T-cell (primary cell): ENCODE measurements at regions of chr2 and their contacts with region 1.

Region 1: GRCh38 chr2:112893048-112893447 is 17.9 kb upstream of the IL37 start:
- DNase-seq: no peak
- ATAC-seq: no peak
- H3K4me3 ChIP-seq: no peak overlapping the region
- H3K4me3 Mint-ChIP-seq: no peak overlapping the region
- H3K27ac ChIP-seq: no peak overlapping the region
- H3K27ac Mint-ChIP-seq: no peak overlapping the region
- H3K4me1 ChIP-seq: no peaks in the 10 kb centered on the region
- H3K4me1 Mint-ChIP-seq: no peaks in the 10 kb centered on the region
- H3K27me3 ChIP-seq: peaks cover 0 to 4% of the 10 kb centered on the region in 2 experiments
- H3K27me3 Mint-ChIP-seq: peaks cover 3 to 5% of the 10 kb centered on the region in 2 donors

Region 2: GRCh38 chr2:112606488-112606902 is 286.6 kb before region 1 on chr2:
- CTCF ChIA-PET with region 1: no interaction called
- POLR2A ChIA-PET with region 1: interaction called in 1 of 2 experiments, 12 read pairs
- DNase-seq: no peak
- ATAC-seq: no peak
- H3K4me3 ChIP-seq: no peak overlapping the region
- H3K4me3 Mint-ChIP-seq: no peak overlapping the region
- H3K27ac ChIP-seq: no peak overlapping the region
- H3K27ac Mint-ChIP-seq: no peak overlapping the region
- H3K4me1 ChIP-seq: no peaks in the 10 kb centered on the region
- H3K4me1 Mint-ChIP-seq: no peaks in the 10 kb centered on the region
- H3K27me3 ChIP-seq: no peaks in the 10 kb centered on the region
- H3K27me3 Mint-ChIP-seq: no peaks in the 10 kb centered on the region

Region 3: DNA sequence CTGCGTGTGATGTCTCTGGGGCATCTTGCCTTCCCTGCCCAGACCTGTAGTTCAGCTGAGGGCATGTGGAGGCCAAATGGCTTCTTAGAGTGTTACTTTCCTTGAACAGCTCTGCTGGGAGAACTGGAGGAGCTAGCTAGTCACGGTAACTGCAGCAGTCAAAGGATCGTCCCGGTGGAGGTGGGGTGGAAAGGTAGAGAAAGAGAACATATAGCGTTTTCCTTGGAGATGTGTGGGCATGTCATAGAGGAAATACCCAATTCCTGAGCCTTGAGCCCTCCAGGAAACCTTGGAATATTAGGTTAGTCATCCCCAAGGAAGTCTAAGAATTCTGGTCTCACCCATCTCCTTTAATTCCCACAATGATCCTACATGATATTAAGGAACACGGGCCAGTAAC is 15.6 kb before region 1 on chr2:
- CTCF ChIA-PET with region 1: no interaction called
- POLR2A ChIA-PET with region 1: no interaction called
- DNase-seq: no peak
- ATAC-seq: no peak
- H3K4me3 ChIP-seq: no peak overlapping the region
- H3K4me3 Mint-ChIP-seq: no peak overlapping the region
- H3K27ac ChIP-seq: no peak overlapping the region
- H3K27ac Mint-ChIP-seq: no peak overlapping the region
- H3K4me1 ChIP-seq: peaks cover 0 to 6% of the 10 kb centered on the region in 2 experiments
- H3K4me1 Mint-ChIP-seq: peaks cover 0 to 11% (median 6%) of the 10 kb centered on the region in 3 donors
- H3K27me3 ChIP-seq: no peaks in the 10 kb centered on the region
- H3K27me3 Mint-ChIP-seq: peaks cover 0 to 9% of the 10 kb centered on the region in 2 donors

Region 4: GRCh38 chr2:112910219-112910618 is 17.2 kb after region 1 on chr2:
- CTCF ChIA-PET with region 1: no interaction called
- POLR2A ChIA-PET with region 1: no interaction called
- DNase-seq: no peak
- ATAC-seq: no peak
- H3K4me3 ChIP-seq: no peak overlapping the region
- H3K4me3 Mint-ChIP-seq: no peak overlapping the region
- H3K27ac ChIP-seq: no peak overlapping the region
- H3K27ac Mint-ChIP-seq: no peak overlapping the region
- H3K4me1 ChIP-seq: peaks cover 0 to 14% of the 10 kb centered on the region in 2 experiments
- H3K4me1 Mint-ChIP-seq: peaks cover 0 to 4% (median 2%) of the 10 kb centered on the region in 3 donors
- H3K27me3 ChIP-seq: no peaks in the 10 kb centered on the region
- H3K27me3 Mint-ChIP-seq: peaks cover 0 to 4% of the 10 kb centered on the region in 2 donors

Region 5: DNA sequence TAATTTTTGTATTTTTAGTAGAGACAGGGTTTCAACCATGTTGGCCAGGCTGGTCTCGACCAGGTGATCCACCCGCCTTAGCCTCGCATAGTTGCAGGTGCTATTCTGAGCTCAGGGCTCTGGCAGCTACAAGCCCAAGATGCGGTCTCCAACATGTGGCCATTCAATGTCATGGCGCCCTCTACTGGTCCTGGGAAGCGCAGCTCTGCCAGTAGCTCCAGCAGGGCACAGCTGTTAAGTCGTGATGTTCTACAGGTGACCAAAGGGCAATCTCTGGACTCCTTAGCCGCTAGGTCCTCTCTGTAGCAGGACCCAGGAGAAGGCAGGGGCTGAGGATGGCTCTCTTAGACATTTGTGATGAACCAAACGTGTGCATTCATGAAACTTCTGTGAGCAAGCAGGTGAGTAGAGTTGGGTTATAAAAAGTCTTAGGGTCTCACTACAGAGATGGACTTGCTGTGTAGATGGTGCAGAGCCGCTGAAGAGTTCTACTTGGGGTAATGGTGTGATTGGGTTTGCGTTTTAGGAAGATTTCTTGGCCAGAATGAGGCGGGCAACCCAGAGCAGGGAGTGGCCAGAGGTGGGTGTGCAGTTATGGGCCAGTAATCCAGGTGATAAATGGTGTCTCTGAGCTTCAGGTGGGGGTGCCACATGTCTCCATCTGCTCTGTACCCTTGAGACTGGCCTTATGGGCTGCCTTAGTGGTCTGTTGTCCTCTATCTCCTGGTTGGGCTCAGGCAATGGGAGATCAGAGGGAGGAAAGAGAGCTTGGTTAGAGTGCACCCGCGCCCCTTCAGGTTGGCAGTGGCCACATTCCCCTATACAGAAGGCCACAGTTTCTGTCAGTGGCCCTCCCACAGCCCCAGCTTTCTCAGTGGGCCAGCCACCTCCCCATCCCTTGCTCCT is 49.0 kb after region 1 on chr2:
- CTCF ChIA-PET with region 1: interaction called in 1 of 2 experiments, 13 read pairs
- POLR2A ChIA-PET with region 1: no interaction called
- DNase-seq: peak in 33 of 35 experiments; percentile 11 to 76 (median 42)
- ATAC-seq: peak; percentile 34 to 58 (median 55)
- H3K4me3 ChIP-seq: no peak overlapping the region
- H3K4me3 Mint-ChIP-seq: no peak overlapping the region
- H3K27ac ChIP-seq: no peak overlapping the region
- H3K27ac Mint-ChIP-seq: no peak overlapping the region
- H3K4me1 ChIP-seq: peaks cover 0 to 5% of the 10 kb centered on the region in 2 experiments
- H3K4me1 Mint-ChIP-seq: peaks cover 0 to 2% (median 0%) of the 10 kb centered on the region in 3 donors
- H3K27me3 ChIP-seq: no peaks in the 10 kb centered on the region
- H3K27me3 Mint-ChIP-seq: no peaks in the 10 kb centered on the region

Region 6: GRCh38 chr2:113305146-113305545 is 412.1 kb after region 1 on chr2:
- CTCF ChIA-PET with region 1: no interaction called
- POLR2A ChIA-PET with region 1: no interaction called
- DNase-seq: no peak
- ATAC-seq: no peak
- H3K4me3 ChIP-seq: no peak overlapping the region
- H3K4me3 Mint-ChIP-seq: no peak overlapping the region
- H3K27ac ChIP-seq: no peak overlapping the region
- H3K27ac Mint-ChIP-seq: no peak overlapping the region
- H3K4me1 ChIP-seq: no peaks in the 10 kb centered on the region
- H3K4me1 Mint-ChIP-seq: no peaks in the 10 kb centered on the region
- H3K27me3 ChIP-seq: no peaks in the 10 kb centered on the region
- H3K27me3 Mint-ChIP-seq: peaks cover 13 to 18% of the 10 kb centered on the region in 2 donors